ENCODE measurements at regions of chr17 and their contacts with region 1.

Region 1: DNA sequence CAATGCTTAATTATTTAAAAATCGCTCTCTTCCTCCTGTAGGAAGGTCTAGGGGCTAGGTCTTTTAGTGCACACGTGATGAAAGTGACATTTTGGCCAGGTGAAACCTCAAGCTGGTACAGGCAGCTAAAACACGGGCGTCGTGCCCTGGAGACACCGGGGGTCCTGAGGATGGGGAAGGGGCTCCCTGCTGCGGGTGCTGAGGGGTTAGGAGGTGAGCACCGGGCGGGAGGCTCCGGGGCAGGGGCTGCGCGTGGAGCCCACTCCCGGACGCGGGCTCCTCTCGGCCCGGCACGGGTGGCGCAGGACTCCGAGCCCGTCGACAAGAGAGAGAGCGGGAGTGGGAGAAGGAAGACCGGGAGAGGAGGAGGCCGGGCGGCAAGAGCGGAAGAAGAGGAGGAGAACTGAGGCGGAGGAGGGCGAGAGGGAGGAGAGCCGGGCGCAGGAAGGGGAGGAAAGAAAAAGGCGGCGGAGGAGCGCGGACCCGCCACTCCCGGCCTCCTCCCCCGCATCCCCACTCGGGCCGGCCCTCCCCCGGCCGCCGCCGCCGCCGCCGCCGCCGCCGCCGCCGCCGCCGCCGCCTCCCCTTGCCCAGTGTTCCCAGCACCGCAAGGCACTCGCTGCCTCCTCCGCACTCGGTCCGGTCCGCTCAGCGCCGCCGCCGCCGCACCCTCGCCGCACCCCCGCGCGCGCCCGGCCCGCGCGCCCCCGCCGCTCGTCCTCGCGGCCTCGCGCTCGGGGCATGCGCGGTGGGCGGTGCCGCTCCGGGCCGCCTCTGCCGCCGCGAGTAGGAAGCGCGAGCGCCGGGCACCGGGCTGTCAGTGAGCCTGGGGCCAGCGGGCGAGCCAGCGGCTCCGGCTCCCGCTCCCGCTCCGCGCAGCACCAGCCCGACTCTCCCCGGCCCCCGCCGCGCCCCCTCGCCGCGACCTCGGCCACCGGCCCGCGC is at the start of gene PRKCA:
- DNase-seq: peak; percentile 73 to 83
- ATAC-seq: peak; percentile 58 to 84
- H3K4me3 ChIP-seq: peak within 1 kb of the TSS; percentile 85
- H3K27ac ChIP-seq: peak within 1 kb of the TSS; percentile 88 to 97
- H3K4me1 ChIP-seq: peaks cover 21% of the 10 kb centered on the region
- CTCF ChIP-seq: no peak
- EP300 ChIP-seq: no peak
- POLR2A ChIP-seq: peak; percentile 99
- RAD21 ChIP-seq: no peak; a peak in 1 of 5 replicates
- polyA plus RNA-seq, gene PRKCA: 65.0 and 79.7 TPM in 2 replicates

Region 2: GRCh38 chr17:66177048-66177447 is 125.0 kb before region 1 on chr17:
- CTCF ChIA-PET with region 1: no interaction called
- POLR2A ChIA-PET with region 1: no interaction called
- DNase-seq: no peak
- ATAC-seq: no peak
- H3K4me3 ChIP-seq: no peak overlapping the region
- H3K27ac ChIP-seq: no peak overlapping the region
- H3K4me1 ChIP-seq: no peaks in the 10 kb centered on the region
- CTCF ChIP-seq: no peak
- EP300 ChIP-seq: no peak
- POLR2A ChIP-seq: no peak
- RAD21 ChIP-seq: no peak

Region 3: GRCh38 chr17:66275651-66276050 is 26.4 kb before region 1 on chr17:
- CTCF ChIA-PET with region 1: interaction called, 24 read pairs
- POLR2A ChIA-PET with region 1: interaction called, 3 read pairs
- DNase-seq: peak; percentile 97 to 98
- ATAC-seq: peak; percentile 94 to 97
- H3K4me3 ChIP-seq: no peak overlapping the region
- H3K27ac ChIP-seq: peak overlapping the region; percentile 91 to 92
- H3K4me1 ChIP-seq: peaks cover 59% of the 10 kb centered on the region
- CTCF ChIP-seq: peak; percentile 48
- EP300 ChIP-seq: peak; percentile 95 to 97
- POLR2A ChIP-seq: no peak
- RAD21 ChIP-seq: peak; percentile 70 to 87

Region 4: DNA sequence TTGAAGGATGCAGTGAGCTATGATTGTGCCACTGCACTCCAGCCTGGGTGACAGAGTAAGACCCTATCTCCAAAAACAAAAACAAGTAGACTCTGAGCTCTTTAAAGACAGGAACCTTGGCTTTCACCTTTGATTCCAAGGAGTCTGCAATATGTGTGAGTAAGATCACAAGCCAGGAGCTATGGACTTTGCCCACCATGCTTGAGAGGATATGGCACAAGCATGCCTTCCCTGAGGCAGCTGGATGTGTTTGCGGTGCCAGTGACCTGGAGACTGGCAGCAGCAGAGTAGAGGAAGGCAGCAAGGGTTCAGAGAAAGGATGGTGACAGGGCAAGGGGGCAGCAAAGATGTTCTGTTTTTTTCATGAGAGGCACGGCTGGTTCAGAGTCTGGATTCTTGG is 14.2 kb before region 1 on chr17:
- CTCF ChIA-PET with region 1: interaction called, 10 read pairs
- POLR2A ChIA-PET with region 1: no interaction called
- DNase-seq: peak in 1 of 2 experiments; percentile 62
- ATAC-seq: peak; percentile 62 to 78; a peak in 4 of 6 replicates
- H3K4me3 ChIP-seq: no peak overlapping the region
- H3K27ac ChIP-seq: peak overlapping the region; percentile 32 to 61
- H3K4me1 ChIP-seq: peaks cover 16% of the 10 kb centered on the region
- CTCF ChIP-seq: no peak
- EP300 ChIP-seq: no peak
- POLR2A ChIP-seq: no peak
- RAD21 ChIP-seq: no peak

Region 5: GRCh38 chr17:66415366-66416206 is 113.5 kb after region 1 on chr17:
- CTCF ChIA-PET with region 1: no interaction called
- POLR2A ChIA-PET with region 1: no interaction called
- DNase-seq: no peak
- ATAC-seq: peak in 1 of 2 experiments; percentile 45; a peak in 2 of 6 replicates
- H3K4me3 ChIP-seq: no peak overlapping the region
- H3K27ac ChIP-seq: peak overlapping the region; percentile 46 to 76
- H3K4me1 ChIP-seq: peaks cover 52% of the 10 kb centered on the region
- CTCF ChIP-seq: no peak
- EP300 ChIP-seq: no peak
- POLR2A ChIP-seq: no peak
- RAD21 ChIP-seq: no peak